IMR-90 (cell line): ENCODE measurements at regions of chr14 and their contacts with region 1.

Region 1: GRCh38 chr14:22370084-22370847 is 218.8 kb downstream of the DAD1 start:
- DNase-seq: no peak
- ATAC-seq: no peak
- H3K4me3 ChIP-seq: no peak overlapping the region
- H3K27ac ChIP-seq: no peak overlapping the region
- H3K4me1 ChIP-seq: no peaks in the 10 kb centered on the region
- H3K27me3 ChIP-seq: peaks cover 22% of the 10 kb centered on the region
- CTCF ChIP-seq: no peak
- POLR2A ChIP-seq: no peak
- RAD21 ChIP-seq: no peak

Region 2: GRCh38 chr14:22438742-22439141 is 68.5 kb after region 1 on chr14:
- CTCF ChIA-PET with region 1: no interaction called
- POLR2A ChIA-PET with region 1: no interaction called
- dilution Hi-C with region 1: no loop called
- in situ Hi-C with region 1: no loop called
- intact Hi-C with region 1: no loop called
- DNase-seq: no peak
- ATAC-seq: no peak
- H3K4me3 ChIP-seq: no peak overlapping the region
- H3K27ac ChIP-seq: no peak overlapping the region
- H3K4me1 ChIP-seq: no peaks in the 10 kb centered on the region
- H3K27me3 ChIP-seq: peaks cover 39% of the 10 kb centered on the region
- CTCF ChIP-seq: no peak
- POLR2A ChIP-seq: no peak
- RAD21 ChIP-seq: no peak

Region 3: DNA sequence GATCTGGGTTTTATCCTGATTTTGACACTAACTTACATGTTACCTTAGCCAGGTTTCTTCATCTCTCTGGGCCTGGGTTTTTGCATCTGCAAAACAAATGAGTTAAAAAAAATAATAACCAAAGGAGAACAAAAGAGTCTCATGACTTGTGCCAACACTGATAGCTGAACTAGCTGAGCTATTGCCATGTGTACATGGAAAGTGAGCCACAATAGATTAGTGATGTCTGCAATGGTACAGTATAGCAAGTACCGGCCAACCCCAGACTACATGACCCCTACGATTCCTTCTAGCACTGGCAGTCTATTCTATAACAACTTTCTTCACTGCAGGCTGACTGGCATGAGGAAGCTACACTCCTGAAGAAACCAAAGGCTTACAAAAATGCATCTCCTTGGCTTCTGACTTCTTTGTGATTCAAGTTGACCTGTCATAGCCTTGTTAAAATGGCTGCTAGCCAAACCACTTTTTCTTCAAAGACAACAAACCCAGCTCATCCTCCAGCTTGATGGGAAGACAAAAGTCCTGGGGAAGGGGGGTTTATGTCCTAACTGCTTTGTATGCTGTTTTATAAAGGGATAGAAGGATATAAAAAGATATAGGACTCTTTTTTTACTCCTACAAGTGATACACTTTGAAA is 95.1 kb after region 1 on chr14:
- CTCF ChIA-PET with region 1: no interaction called
- POLR2A ChIA-PET with region 1: interaction called, 16 read pairs
- dilution Hi-C with region 1: no loop called
- in situ Hi-C with region 1: no loop called
- intact Hi-C with region 1: no loop called
- DNase-seq: peak; percentile 1
- ATAC-seq: no peak
- H3K4me3 ChIP-seq: no peak overlapping the region
- H3K27ac ChIP-seq: no peak overlapping the region
- H3K4me1 ChIP-seq: 0 out of 2 replicates have a peak, but pooled peaks cover 2% of the 10 kb centered on the region
- H3K27me3 ChIP-seq: peaks cover 39% of the 10 kb centered on the region
- CTCF ChIP-seq: no peak
- POLR2A ChIP-seq: no peak
- RAD21 ChIP-seq: no peak

Region 4: DNA sequence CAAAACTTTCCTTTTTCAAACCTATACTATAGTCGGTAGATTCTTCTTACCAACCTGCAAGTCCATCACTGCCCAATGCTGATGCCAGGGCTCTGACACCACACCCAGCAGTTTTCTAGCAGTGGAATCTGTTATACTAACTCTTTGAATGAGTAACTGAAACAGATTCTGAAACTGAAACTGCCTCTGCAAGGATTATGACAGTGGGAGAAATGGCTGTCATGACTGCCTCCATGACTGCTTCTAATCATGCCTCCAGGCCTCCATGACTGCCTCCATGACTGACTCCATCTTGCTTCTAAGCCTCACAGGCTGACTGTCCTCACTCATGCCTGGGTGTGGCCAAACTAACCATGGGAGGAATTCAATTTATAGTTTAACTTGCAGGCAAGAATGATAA is 366.8 kb after region 1 on chr14:
- CTCF ChIA-PET with region 1: no interaction called
- POLR2A ChIA-PET with region 1: no interaction called
- dilution Hi-C with region 1: no loop called
- in situ Hi-C with region 1: no loop called
- intact Hi-C with region 1: no loop called
- DNase-seq: no peak
- ATAC-seq: no peak
- H3K4me3 ChIP-seq: no peak overlapping the region
- H3K27ac ChIP-seq: no peak overlapping the region
- H3K4me1 ChIP-seq: no peaks in the 10 kb centered on the region
- H3K27me3 ChIP-seq: peaks cover 2% of the 10 kb centered on the region
- CTCF ChIP-seq: no peak
- POLR2A ChIP-seq: no peak
- RAD21 ChIP-seq: no peak